Posterior vena cava (tissue), 2 donors: ENCODE measurements at regions of chr22 and their contacts with region 1.

Region 1: GRCh38 chr22:35611891-35612576 is 5.1 kb downstream of the MB start:
- DNase-seq: no peak

Region 2: DNA sequence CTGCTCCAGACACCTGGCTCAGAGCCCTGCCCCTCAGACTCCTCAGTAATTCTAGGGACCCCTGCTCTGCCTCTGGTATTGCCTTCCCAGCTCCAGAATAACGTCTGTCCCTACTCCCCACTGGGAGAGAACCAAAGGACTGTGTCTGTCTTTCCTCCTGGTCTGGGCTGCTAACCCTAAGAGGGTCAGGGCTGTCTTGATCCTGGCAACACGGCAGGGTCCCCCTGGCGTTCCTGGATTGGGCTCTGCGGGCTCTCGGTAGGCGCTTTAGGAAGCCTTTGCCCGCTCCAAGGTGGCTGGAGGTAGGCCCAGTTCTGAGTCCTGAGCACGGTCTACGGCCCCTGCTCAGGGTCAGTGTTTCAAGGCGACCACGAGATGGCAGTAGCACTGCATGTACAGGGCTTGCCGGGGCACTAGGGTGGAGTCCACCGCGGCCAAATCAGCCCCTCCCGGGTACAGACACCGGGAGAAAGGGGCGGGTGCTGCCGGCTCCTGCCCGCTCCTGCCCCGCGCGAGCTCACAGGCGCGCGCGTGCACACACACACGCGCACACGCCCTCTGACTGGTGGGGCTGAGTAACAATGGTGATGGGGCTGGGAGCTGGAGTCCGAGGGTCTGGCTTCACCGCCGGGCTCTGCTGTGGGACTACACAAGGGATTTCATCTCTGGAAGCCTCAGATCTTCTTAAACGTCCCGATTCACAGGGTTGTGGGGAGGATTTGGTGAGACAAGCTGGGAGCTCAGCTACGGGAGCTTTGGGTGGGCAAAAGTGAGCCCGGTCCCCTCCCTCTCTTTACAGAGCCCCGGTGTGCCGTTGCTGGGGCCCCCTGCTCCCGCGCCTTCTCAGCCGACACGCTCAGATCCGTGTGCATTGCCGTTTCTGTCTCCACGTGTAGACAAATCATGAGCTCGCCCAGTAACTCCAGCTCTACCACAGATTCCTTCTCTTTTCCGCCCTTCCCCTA is 261.2 kb before region 1 on chr22:
- intact Hi-C with region 1: loop called in 1 of 2 experiments (anchors 10 kb)
- DNase-seq: peak; percentile 97

Region 3: DNA sequence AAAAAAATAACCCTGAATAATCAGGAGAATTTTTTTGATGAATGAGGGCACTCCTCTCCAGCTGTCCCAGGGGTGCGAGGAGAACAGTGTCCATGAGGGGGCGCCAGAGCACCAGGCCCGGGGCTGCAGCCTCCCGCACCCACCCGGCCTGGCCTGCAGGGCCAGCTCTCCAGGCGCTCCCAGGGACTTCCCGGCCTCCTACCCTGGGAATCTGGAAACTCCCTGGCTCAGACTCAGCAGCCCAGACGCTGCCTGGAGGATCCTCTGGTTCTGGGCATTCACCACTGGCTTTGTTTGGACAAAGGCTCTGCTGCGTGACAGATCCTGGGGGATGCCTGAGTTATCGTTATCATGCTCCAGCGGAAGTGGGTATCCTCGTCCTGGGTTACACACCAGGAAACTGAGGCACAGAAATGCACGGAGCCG is 181.1 kb before region 1 on chr22:
- intact Hi-C with region 1: loop called in 1 of 2 experiments (anchors 5 kb)
- DNase-seq: peak; percentile 95

Region 4: GRCh38 chr22:35648066-35649025 is 36.3 kb after region 1 on chr22 and contains the start of gene APOL6:
- intact Hi-C with region 1: no loop called
- DNase-seq: no peak
- total RNA-seq, gene APOL6: 12.6 to 14.6 TPM

Region 5: GRCh38 chr22:35678836-35679235 is 66.8 kb after region 1 on chr22:
- intact Hi-C with region 1: loop called in 1 of 2 experiments (anchors 2 kb)
- DNase-seq: no peak

Region 6: DNA sequence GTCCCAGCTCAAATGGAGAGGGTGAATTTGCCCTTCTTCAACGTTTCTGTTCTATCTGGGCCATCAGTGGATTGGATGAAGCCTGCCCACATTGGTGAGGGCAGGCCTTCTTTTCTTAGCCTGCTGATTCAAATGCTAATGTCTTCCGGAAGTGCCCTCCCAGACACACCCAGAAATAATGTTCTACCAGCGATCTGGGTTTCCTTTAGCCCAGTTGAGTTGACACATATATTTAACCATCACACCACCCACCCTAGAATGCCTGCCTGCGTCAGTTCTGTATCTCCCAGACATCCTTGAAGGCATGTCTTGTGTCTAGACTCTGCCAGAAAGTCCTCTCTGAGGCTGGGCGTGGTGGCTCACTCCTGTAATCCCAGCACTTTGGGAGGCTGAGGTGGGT is 1056.8 kb after region 1 on chr22:
- intact Hi-C with region 1: loop called in 1 of 2 experiments (anchors 5 kb)
- DNase-seq: no peak